BJ (cell line): ENCODE measurements at regions of chr1 and their contacts with region 1.

Region 1: GRCh38 chr1:192587386-192588266 is 12.1 kb downstream of the RGS1 start:
- DNase-seq: no peak
- H3K4me3 ChIP-seq: no peak overlapping the region
- H3K27me3 ChIP-seq: no peaks in the 10 kb centered on the region
- CTCF ChIP-seq: no peak

Region 2: GRCh38 chr1:192573499-192573898 is 14.1 kb before region 1 on chr1:
- CTCF ChIA-PET with region 1: interaction called, 14 read pairs
- POLR2A ChIA-PET with region 1: no interaction called
- DNase-seq: no peak
- H3K4me3 ChIP-seq: no peak overlapping the region
- H3K27me3 ChIP-seq: no peaks in the 10 kb centered on the region
- CTCF ChIP-seq: no peak